ENCODE measurements at regions of chr4 and their contacts with region 1.

Region 1: DNA sequence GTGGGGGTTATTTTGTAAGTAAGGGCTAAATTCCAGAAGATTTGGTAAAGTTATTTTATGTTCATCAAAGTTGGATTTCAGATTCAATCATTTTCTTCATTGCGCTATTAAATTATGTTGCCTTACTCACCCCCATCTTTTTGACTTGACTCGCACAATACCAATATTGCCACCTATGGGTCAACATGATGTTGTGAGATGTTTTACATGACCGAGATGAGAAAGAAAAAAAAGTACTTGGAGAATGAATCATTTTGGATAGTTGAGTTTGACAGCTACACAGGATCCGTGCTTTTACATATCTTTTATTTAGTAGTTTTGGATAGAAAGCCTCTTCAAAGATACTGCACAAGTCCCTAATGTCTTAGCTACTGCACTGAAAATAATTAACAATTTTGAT is 224.2 kb upstream of the EMCN start:
- DNase-seq: no peak
- ATAC-seq: no peak
- H3K4me3 ChIP-seq: no peak overlapping the region
- H3K27ac ChIP-seq: no peak overlapping the region
- H3K4me1 ChIP-seq: no peaks in the 10 kb centered on the region
- H3K27me3 ChIP-seq: no peaks in the 10 kb centered on the region
- CTCF ChIP-seq: peak; percentile 52

Region 2: GRCh38 chr4:100421361-100421978 is 320.6 kb before region 1 on chr4:
- intact Hi-C with region 1: loop called (anchors 2 to 10 kb)
- DNase-seq: no peak
- ATAC-seq: peak; percentile 64 to 93 (median 80)
- H3K4me3 ChIP-seq: peak overlapping the region; percentile 60
- H3K27ac ChIP-seq: peak overlapping the region; percentile 74
- H3K4me1 ChIP-seq: peaks cover 20% of the 10 kb centered on the region
- H3K27me3 ChIP-seq: no peaks in the 10 kb centered on the region
- CTCF ChIP-seq: peak; percentile 79

Region 3: DNA sequence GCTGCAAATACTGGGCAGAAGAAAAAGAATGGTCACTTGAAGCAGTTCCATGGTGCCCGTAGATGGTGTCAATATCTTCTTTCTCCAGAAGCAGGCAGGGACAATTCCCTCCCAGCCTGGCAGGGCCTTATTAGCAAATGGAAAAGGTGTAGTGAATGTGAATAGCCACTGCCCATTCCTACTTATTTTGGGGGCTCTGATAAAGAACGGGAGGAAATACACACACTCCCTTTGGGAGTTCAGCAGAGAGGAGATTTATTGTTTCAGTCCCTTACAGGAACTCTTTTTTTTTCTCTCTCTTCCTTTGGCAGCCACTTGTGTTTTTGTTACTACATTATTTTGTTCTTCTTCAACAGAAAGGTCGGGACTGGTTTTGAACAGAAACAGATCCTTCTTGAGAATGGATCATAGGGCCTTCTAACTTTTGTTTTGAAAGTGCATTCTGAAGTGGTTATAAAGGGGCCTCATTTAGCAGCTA is 224.1 kb before region 1 on chr4 and contains the start of gene EMCN:
- intact Hi-C with region 1: loop called in 1 of 2 experiments (anchors 10 kb)
- DNase-seq: no peak
- ATAC-seq: no peak
- H3K4me3 ChIP-seq: peak within 1 kb of the TSS; percentile 61
- H3K27ac ChIP-seq: peak within 1 kb of the TSS; percentile 44
- H3K4me1 ChIP-seq: no peaks in the 10 kb centered on the region
- H3K27me3 ChIP-seq: no peaks in the 10 kb centered on the region
- CTCF ChIP-seq: no peak
- total RNA-seq, gene EMCN: 7.8 to 25.0 (median 13.2) TPM

Region 4: DNA sequence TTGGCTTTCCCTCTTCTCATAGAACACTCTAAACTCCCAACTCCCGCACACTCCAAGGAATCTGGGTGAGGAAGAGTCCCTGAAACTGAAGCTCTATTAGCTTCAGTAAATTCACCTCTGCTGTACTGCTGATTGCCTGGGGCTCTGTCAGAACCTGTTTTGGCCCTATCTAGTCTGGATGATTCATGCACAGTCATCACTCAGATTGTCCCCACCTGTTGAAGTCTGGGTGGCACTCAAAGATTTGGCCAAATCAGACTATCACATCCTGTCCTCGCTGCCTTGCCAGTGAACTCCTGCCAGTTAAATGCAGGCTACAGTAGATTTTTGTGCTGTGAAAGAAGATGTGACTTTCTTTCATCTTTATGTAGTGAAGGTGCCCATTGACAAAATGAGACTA is 160.7 kb before region 1 on chr4:
- intact Hi-C with region 1: loop called in 1 of 2 experiments (anchors 10 kb)
- DNase-seq: peak; percentile 20 to 58
- ATAC-seq: peak; percentile 96 to 99 (median 98)
- H3K4me3 ChIP-seq: no peak overlapping the region
- H3K27ac ChIP-seq: peak overlapping the region; percentile 89
- H3K4me1 ChIP-seq: peaks cover 8% of the 10 kb centered on the region
- H3K27me3 ChIP-seq: no peaks in the 10 kb centered on the region
- CTCF ChIP-seq: no peak

Region 5: DNA sequence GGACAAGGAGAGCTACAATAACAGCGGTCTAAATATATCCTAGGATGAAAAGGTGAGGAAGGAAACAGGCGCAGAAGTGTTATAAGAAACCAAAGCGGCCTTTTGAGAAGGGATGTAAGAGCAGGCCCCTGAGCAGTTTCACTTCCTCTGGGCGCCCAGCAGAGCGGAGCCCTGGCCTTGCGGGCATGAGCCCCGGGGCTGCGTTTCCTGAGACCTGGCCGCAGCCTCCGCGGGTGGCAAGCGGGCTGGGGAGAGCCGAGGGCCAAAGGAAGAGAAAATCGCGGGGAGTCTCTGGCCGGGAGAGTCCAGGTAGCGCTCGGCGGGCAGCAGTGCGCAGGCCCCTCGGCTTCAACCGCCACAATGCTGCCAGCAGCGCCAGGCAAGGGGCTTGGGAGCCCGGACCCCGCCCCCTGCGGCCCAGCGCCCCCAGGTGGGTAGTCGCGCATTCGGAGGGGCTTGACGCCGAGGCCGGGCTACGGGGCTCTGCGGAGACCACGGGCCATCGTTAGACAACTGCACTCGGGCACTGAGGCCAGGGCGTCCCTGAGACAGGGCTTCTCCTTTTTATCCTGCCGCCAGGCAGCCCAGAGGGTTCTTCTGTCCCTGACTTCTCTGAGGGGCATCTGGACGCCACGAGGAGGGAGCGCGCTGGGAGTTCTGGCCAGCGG is 1048.6 kb after region 1 on chr4 and contains the start of gene BANK1:
- intact Hi-C with region 1: no loop called
- DNase-seq: peak; percentile 30 to 58
- ATAC-seq: peak in 2 of 4 donors; percentile 22 to 30
- H3K4me3 ChIP-seq: peak within 1 kb of the TSS; percentile 67
- H3K27ac ChIP-seq: no peak within 1 kb of the TSS
- H3K4me1 ChIP-seq: no peaks in the 10 kb centered on the region
- H3K27me3 ChIP-seq: peaks cover 0 to 16% (median 0%) of the 10 kb centered on the region in 3 donors
- CTCF ChIP-seq: no peak
- total RNA-seq, gene BANK1: 0.07 to 0.55 (median 0.40) TPM